Transverse colon (tissue), 4 donors: ENCODE measurements at regions of chrX and their contacts with region 1.

Region 1: DNA sequence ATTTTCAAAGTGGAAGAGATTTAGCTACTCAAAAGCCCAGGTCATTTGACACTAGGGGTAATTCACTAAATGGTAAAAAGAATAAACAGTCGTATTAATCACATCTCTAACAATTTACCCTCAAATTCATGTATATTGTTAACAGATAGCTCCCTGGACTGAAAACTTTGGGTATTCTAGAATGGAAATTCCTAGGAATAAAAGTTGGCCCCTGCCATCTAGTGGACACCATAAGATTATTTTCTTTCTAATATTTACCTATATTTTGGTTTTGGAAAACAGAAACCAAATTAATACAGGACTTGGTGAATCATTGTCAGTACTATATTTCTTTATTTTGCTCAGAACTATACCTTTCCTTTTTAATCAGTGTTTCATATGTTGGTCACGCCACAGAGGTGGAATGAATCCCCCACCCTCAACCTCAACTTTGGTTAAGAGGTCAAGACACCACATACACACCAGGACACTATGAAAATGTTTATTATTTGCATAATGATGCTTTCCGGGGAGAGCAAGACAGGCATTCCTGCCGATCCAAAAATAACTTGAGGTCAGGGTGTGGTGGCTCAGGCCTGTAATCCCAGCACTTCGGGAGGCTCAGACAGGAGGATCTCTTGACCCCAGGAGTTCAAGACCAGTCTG is 96.2 kb upstream of the APOOL start:
- DNase-seq: no peak
- H3K4me3 ChIP-seq: no peak overlapping the region
- H3K27ac ChIP-seq: no peak overlapping the region
- H3K4me1 ChIP-seq: no peaks in the 10 kb centered on the region
- H3K27me3 ChIP-seq: no peaks in the 10 kb centered on the region
- CTCF ChIP-seq: peak in 3 of 5 experiments; percentile 13 to 21 (median 17)
- EP300 ChIP-seq: no peak
- POLR2A ChIP-seq: no peak

Region 2: DNA sequence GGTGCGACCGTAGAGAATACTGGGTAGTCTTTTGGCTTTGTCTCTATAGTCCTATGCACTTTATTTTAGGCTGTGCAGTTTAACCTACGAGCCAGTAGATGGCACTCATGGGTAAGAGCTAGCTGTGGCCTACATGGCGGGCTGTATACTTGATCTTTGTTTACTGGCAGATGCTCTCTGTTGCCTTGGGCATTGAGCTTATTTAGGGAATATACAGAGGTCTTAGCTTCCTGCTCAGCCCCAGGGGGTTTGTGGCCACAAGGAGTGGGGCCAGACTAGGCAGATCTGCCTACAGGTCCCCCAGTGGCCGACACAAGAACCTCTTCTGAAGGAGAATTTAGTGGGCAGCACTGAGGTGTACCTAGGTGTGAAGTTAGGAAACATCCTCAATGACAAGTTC is 177.6 kb before region 1 on chrX:
- in situ Hi-C with region 1: loop called in 2 of 4 experiments (anchors 25 kb)
- intact Hi-C with region 1: no loop called
- DNase-seq: no peak
- H3K4me3 ChIP-seq: no peak overlapping the region
- H3K27ac ChIP-seq: no peak overlapping the region
- H3K4me1 ChIP-seq: no peaks in the 10 kb centered on the region
- H3K27me3 ChIP-seq: no peaks in the 10 kb centered on the region
- CTCF ChIP-seq: peak; percentile 58 to 78 (median 64)
- EP300 ChIP-seq: no peak
- POLR2A ChIP-seq: no peak

Region 3: GRCh38 chrX:84933935-84934556 is 26.6 kb after region 1 on chrX:
- in situ Hi-C with region 1: no loop called
- intact Hi-C with region 1: loop called (anchors 1 kb)
- DNase-seq: no peak
- H3K4me3 ChIP-seq: no peak overlapping the region
- H3K27ac ChIP-seq: no peak overlapping the region
- H3K4me1 ChIP-seq: no peaks in the 10 kb centered on the region
- H3K27me3 ChIP-seq: no peaks in the 10 kb centered on the region
- CTCF ChIP-seq: no peak
- EP300 ChIP-seq: no peak
- POLR2A ChIP-seq: no peak